SK-N-SH (cell line): ENCODE measurements at regions of chr2 and their contacts with region 1.

Region 1: DNA sequence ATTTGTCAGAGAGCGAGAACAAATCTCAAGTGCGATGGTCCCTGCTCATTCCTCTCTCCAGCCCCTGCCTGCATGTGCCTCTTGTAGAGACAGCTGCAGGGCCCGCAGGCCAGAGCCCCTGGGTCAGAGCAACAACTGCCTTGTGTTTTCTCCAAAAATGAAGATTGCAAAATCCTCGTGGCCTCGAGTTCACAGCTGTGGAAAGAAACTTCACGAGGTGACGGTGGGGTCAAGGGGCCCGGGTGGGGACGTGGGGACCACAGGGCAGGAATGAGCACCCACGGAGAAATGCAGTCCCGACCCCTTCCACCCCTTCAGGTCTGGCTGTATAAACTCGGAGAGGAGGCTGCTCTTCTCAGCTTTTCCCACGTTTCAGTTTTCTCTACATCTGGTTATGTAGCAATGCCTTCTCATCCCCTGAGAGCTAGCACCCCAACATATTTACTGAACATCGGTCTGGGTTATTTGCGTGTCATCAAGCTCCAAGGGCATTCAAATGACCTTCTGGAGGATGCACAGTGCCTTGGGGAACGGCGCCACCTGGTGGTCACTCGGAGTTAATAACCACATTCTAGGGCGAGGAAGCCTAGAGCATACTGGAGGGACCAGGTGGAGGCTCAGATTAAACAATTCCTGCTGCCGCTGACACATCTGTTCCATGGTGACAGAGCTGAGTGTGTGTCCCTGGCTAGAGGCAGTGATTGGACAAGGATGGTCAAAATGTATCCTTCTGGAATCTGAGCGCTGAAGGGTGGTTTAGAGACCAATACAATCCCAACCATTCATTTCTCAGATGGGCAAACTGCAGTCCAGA is 91.4 kb upstream of the CYRIA start:
- DNase-seq: peak; percentile 79
- H3K4me3 ChIP-seq: peak overlapping the region in 1 of 2 experiments; percentile 27; a peak in 1 of 4 replicates
- H3K27ac ChIP-seq: no peak overlapping the region
- H3K4me1 ChIP-seq: peaks cover 0 to 4% of the 10 kb centered on the region in 2 experiments; a peak in 1 of 4 replicates
- H3K27me3 ChIP-seq: no peaks in the 10 kb centered on the region
- CTCF ChIP-seq: peak; percentile 95
- EP300 ChIP-seq: no peak
- RAD21 ChIP-seq: peak; percentile 99

Region 2: DNA sequence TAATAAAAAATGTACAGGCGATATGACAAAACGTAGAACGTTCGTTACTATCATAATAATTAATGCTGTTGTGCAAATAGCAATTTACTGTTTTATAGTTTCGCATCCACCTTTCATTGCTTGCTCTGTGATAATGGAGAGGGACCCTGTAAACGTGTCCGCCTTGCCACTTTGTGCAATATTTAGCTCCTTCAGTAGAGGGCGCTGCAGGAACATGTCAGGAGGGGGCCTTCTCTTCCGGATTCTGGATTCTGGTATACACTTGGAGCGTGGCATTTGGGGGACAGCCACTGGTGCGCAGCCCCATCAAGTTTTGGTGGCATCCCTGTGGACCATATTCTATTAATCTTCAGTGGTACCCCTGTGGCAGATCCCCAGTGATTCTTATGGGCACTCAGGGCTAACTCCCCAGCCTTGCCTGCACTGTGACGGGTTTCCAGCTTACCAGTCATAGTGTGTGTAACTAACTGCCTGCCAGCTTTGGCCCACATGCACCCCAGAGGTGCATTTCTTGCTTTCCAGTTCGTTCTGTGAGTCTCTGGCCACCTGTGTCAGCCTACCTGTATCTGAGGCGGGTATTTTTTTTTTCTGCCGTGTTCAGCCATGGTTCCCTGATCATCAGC is 231.7 kb before region 1 on chr2:
- CTCF ChIA-PET with region 1: interaction called, 15 read pairs
- POLR2A ChIA-PET with region 1: no interaction called
- DNase-seq: peak; percentile 37
- H3K4me3 ChIP-seq: peak overlapping the region in 1 of 2 experiments; percentile 40; a peak in 1 of 4 replicates
- H3K27ac ChIP-seq: no peak overlapping the region
- H3K4me1 ChIP-seq: peaks cover 0 to 22% of the 10 kb centered on the region in 2 experiments; a peak in 2 of 4 replicates
- H3K27me3 ChIP-seq: no peaks in the 10 kb centered on the region
- CTCF ChIP-seq: peak; percentile 44
- EP300 ChIP-seq: no peak
- RAD21 ChIP-seq: peak; percentile 59

Region 3: GRCh38 chr2:16635791-16636699 is 121.0 kb before region 1 on chr2:
- CTCF ChIA-PET with region 1: interaction called, 298 read pairs
- POLR2A ChIA-PET with region 1: no interaction called
- DNase-seq: peak; percentile 66
- H3K4me3 ChIP-seq: no peak overlapping the region; a peak in 1 of 4 replicates
- H3K27ac ChIP-seq: no peak overlapping the region
- H3K4me1 ChIP-seq: peaks cover 13 to 25% of the 10 kb centered on the region in 2 experiments; a peak in 2 of 4 replicates
- H3K27me3 ChIP-seq: no peaks in the 10 kb centered on the region
- CTCF ChIP-seq: no peak
- EP300 ChIP-seq: no peak
- RAD21 ChIP-seq: no peak

Region 4: GRCh38 chr2:16682431-16683118 is 74.5 kb before region 1 on chr2:
- CTCF ChIA-PET with region 1: interaction called, 23 read pairs
- POLR2A ChIA-PET with region 1: no interaction called
- DNase-seq: no peak
- H3K4me3 ChIP-seq: no peak overlapping the region
- H3K27ac ChIP-seq: no peak overlapping the region
- H3K4me1 ChIP-seq: peaks cover 0 to 15% of the 10 kb centered on the region in 2 experiments; a peak in 2 of 4 replicates
- H3K27me3 ChIP-seq: no peaks in the 10 kb centered on the region
- CTCF ChIP-seq: no peak
- EP300 ChIP-seq: no peak
- RAD21 ChIP-seq: no peak

Region 5: GRCh38 chr2:16717477-16717876 is 39.6 kb before region 1 on chr2:
- CTCF ChIA-PET with region 1: interaction called, 16 read pairs
- POLR2A ChIA-PET with region 1: no interaction called
- DNase-seq: no peak
- H3K4me3 ChIP-seq: no peak overlapping the region
- H3K27ac ChIP-seq: no peak overlapping the region
- H3K4me1 ChIP-seq: peaks cover 0 to 7% of the 10 kb centered on the region in 2 experiments; a peak in 2 of 4 replicates
- H3K27me3 ChIP-seq: no peaks in the 10 kb centered on the region
- CTCF ChIP-seq: no peak
- EP300 ChIP-seq: no peak
- RAD21 ChIP-seq: no peak

Region 6: DNA sequence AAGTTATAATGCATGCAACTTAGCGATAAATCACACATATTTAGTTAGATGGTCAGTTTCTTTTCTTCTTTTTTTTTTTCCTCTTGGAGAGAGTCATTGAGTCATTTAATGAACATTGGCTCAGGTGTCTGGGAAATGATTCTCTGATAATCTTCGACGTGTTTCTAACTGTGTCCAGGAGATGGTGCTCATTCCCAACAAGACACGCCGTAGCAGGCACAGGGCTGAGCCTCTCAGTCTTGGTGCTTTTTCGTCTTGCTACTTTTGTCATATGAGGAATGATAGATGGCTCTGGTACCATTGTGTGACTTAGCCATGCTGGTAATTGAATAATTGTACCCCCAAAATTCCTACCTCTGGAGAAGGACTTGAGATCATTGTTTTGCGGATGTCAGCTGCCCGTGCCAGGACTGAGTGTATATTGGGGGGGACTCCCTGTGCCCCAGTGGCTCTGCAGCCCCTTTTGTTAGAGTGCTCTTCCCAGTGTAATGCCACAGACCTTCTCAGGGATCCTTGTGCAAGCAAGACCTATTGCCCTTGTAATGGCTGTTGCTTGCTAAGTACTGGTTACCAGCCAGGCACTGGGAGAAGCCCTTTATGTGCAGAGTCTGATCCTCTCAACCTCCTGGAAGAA is 16.2 kb after region 1 on chr2:
- CTCF ChIA-PET with region 1: interaction called, 120 read pairs
- POLR2A ChIA-PET with region 1: no interaction called
- DNase-seq: peak; percentile 67
- H3K4me3 ChIP-seq: no peak overlapping the region; a peak in 1 of 4 replicates
- H3K27ac ChIP-seq: no peak overlapping the region
- H3K4me1 ChIP-seq: peaks cover 0 to 5% of the 10 kb centered on the region in 2 experiments; a peak in 2 of 4 replicates
- H3K27me3 ChIP-seq: no peaks in the 10 kb centered on the region
- CTCF ChIP-seq: peak; percentile 74
- EP300 ChIP-seq: peak in 1 of 2 experiments; percentile 38; a peak in 1 of 4 replicates
- RAD21 ChIP-seq: peak; percentile 100